Calu3 (cell line): ENCODE measurements at regions of chr7 and their contacts with region 1.

Region 1: DNA sequence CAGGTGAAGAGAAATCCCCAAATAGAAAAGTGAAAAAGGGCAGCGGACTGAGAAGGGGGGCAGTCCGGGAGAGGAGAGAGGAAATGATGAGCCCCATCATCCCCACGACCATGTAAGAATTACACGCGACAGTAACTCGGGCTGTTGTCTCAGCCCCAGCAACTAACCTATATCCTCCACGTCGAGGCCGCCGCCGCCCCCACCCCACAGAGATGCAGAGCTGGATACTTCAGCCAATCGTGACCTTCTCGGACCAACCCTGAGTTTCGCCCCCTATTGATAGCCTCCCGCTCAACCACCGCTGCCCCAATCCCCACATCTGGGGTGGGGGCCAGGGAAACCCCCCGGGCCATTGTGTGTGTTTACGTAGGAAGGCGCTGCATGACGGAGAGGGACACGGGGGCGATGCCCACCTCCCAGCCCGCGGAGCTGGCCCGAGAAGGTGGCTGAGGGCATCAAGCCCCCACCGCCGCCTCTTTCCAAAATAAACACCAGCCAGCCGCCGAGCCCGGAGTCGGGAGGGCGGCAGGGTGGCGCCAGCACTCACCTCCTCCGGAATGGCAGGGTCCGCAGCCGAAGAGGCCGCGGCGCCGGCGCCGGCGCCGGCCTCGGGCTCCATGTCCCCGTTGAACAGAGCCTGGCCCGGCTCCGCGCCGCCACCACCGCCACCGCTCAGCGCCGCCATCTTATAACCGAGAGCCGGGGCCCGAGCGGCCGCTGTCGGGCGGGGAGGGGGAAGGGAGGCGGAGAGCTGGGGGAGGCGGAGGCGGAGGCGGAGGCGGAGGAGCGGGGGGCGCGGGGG is 509 bp downstream of the BRAF start:
- DNase-seq: peak; percentile 74
- H3K4me3 Mint-ChIP-seq: no peak overlapping the region
- H3K27ac Mint-ChIP-seq: no peak overlapping the region
- H3K4me1 Mint-ChIP-seq: no peaks in the 10 kb centered on the region
- H3K27me3 Mint-ChIP-seq: no peaks in the 10 kb centered on the region
- CTCF ChIP-seq: peak; percentile 53

Region 2: DNA sequence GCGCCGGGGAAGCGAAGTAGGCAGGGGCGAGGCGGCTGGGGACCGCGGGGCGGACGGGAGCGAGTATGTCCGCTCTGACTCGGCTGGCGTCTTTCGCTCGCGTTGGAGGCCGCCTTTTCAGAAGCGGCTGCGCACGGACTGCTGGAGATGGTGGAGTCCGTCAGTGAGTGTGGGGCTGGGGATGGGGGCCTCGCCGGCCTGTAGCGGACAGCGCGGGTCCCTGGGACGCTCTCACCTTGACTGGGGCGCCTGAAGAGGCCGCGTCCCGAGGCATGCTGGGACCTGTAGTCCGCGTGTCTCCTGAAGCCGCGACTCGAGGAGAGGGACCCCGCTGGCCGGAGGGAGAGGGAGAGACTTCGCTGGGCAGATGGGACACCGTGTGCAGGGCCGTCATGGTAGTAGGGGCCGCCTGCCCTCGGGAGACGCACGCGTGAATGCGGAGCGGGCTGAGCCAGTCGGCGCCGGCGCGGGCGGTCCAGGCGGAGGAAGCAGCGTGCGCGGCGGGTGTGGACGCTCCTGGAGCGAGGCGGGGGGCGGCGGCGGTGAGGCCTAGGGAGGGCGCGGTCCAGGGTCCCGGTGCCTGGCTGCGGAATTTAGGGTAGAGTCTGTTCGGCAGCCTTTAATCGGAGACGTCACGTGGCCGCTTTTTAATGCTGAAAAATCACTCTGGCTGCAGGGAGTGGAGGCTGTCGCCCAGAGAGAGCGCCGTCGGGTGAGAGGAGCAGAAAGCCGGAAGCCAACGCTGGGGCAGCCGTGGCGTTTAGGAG is 227.4 kb before region 1 on chr7 and contains the start of gene NDUFB2:
- CTCF ChIA-PET with region 1: no interaction called
- intact Hi-C with region 1: loop called (anchors 10 kb)
- DNase-seq: peak; percentile 92
- H3K4me3 Mint-ChIP-seq: peak within 1 kb of the TSS; percentile 98
- H3K27ac Mint-ChIP-seq: peak within 1 kb of the TSS; percentile 95
- H3K4me1 Mint-ChIP-seq: peaks cover 24% of the 10 kb centered on the region
- H3K27me3 Mint-ChIP-seq: no peaks in the 10 kb centered on the region
- CTCF ChIP-seq: no peak
- total RNA-seq, gene NDUFB2: 128 and 132 TPM in 2 replicates

Region 3: DNA sequence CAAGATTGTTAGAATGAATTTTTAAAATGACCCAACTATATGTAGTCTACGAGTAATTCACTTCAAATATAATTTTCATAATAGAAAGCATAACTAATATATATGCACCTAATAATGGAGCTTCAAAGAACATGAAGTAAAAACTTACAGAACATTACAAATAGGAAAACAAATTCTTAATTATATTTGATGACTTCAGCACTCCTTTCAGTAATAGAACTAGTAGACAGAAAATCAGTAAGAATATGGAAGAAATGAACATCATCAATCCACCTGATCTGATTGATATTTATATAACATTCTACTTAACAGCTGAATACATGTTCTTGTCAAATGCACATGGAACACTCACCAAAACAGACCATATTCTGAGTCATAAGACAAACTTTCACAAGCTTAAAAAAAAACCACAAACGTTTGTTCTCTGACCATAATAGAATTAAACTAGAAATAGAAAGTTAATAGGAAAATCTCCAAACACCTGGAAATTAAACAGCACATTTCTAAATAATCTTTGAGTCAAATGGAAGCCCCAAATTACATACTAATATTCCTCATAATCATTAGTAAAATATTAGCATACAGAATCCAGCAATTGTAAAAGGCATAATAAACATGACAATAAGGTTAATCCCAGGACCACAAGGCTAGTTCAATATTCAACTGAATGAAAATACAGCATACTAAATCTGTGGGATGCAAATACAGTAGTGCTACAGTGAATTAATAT is 47.5 kb before region 1 on chr7:
- CTCF ChIA-PET with region 1: interaction called, 10 read pairs
- intact Hi-C with region 1: no loop called
- DNase-seq: no peak
- H3K4me3 Mint-ChIP-seq: no peak overlapping the region
- H3K27ac Mint-ChIP-seq: no peak overlapping the region
- H3K4me1 Mint-ChIP-seq: peaks cover 6% of the 10 kb centered on the region
- H3K27me3 Mint-ChIP-seq: no peaks in the 10 kb centered on the region
- CTCF ChIP-seq: no peak